ENCODE measurements at regions of chr10 and their contacts with region 1.

Region 1: DNA sequence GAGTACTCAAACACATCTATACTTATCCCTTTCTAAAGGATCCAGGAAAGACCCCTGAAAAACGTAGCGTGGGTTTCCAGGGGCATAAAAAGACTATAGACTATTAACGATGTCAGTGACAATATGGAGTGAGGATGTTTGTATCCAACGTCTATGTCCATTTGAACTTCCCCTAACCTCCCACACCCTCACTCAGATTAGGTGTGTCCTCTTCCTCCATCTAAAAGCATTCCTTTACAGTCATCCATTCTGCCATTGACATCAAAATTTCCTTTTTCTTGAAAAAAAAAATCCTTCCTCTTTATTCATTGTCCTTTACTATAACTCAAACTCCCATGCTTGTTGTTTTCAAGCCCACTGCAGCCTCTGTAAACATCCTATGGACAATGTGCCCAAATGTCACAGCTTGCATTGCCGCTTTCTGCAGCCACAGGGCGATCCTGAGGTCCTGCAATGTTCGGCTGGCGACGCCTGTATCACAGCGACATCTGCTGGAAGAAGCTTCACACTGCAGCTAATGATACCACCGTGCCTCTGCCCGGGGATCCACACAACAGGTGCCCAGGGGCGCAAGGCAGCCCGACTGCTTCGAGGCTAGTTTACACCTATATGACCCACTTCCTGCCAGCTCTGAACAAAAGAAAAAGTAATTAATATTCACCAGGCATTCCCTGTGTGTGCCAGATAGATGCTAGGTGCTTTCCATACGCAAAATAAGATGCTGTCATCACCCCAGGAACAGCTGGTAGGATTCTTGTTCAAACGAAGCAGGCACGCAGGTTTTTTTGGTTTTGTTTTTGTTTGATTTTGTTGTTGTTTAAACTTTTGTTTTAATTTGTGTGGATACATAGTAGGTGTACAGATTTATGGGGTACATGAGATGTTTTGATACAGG is 267.9 kb upstream of the GHITM start:
- H3K4me3 ChIP-seq: no peak overlapping the region
- H3K27ac ChIP-seq: no peak overlapping the region
- H3K4me1 ChIP-seq: no peaks in the 10 kb centered on the region
- CTCF ChIP-seq: peak; percentile 91

Region 2: DNA sequence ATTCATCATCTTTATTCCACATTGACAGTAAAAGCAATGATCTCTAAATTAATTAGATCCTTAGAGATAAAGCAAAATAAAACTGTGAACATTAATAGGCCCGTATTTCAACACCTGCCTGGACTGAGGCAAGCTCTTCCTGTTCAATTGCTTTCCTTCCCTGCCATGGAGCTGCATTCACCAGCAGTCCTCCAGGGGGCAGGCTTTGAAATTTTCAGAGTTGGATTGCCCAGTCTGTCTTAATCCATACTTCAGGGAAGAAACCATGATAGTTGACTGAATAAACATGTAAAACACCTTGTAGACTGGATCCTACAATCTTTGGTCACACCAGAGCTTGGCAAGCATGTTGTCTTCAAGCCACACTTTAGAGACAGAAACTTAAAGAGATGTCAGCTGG is 1059.8 kb before region 1 on chr10:
- CTCF ChIA-PET with region 1: interaction called, 10 read pairs
- POLR2A ChIA-PET with region 1: no interaction called
- H3K4me3 ChIP-seq: no peak overlapping the region
- H3K27ac ChIP-seq: no peak overlapping the region
- H3K4me1 ChIP-seq: no peaks in the 10 kb centered on the region
- CTCF ChIP-seq: no peak

Region 3: DNA sequence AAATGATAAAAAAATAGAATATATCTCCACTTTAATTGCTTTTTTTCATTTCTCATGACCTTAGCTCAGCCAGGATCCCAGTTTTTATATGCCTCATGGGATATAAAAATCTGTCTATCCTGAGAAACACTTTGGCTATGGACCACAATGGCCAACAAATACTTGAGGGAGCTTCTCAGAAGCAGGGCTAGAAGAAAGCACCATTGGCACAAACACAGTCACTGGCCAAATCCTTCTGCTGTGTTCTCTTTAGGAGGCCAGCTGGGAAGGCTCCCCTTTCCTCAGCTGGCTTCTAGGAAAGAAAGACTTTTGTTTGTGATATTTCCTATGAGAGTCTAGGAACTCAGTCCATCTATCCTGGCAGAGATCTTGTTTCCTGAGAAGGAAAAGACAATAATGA is 588.3 kb before region 1 on chr10:
- CTCF ChIA-PET with region 1: no interaction called
- POLR2A ChIA-PET with region 1: no interaction called
- H3K4me3 ChIP-seq: no peak overlapping the region
- H3K27ac ChIP-seq: no peak overlapping the region
- H3K4me1 ChIP-seq: no peaks in the 10 kb centered on the region
- CTCF ChIP-seq: no peak

Region 4: DNA sequence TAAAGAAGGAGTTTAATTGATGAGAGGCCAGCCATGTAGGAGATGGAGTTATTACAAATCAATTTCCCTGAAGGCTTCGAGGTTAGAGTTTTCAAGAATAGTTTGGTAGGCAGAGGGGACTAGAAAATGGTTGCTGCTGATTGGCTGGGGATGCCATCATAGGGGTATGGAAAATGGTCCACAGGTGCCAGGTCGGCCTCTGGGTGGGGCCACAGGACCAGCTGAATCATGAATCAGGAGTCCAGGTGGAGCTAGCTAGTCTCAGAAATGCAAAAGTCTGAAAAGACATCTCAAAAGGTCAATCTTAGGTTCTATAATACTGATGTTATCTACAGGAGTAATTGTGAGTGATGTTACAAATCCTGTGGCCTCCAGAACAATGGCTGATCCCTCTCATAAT is 446.1 kb before region 1 on chr10:
- CTCF ChIA-PET with region 1: interaction called, 10 read pairs
- POLR2A ChIA-PET with region 1: no interaction called
- H3K4me3 ChIP-seq: no peak overlapping the region
- H3K27ac ChIP-seq: no peak overlapping the region
- H3K4me1 ChIP-seq: no peaks in the 10 kb centered on the region
- CTCF ChIP-seq: no peak